Lower leg skin (tissue), 4 donors: ENCODE measurements at regions of chr19 and their contacts with region 1.

Region 1: DNA sequence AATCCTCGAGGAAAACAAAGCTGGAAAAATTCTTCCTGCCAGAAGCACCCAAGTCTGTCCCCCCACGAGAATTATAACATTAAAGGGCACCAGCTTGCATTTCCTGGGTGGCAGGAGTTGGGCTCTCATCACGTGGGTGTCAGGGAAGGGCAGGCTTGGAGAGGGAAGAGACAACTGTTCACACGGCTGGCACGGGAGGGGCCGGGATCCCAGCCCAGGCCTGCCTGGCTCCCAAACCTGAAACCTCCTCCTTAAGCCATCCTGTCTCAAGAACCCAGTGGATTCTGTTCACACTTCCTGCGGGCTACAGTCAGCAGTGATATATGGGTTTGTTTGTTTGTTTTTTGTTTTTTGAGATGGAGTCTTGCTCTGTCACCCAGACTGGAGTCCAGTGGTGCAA is 12.2 kb downstream of the GRIK5 start:
- DNase-seq: no peak
- H3K4me3 ChIP-seq: no peak overlapping the region
- CTCF ChIP-seq: no peak
- POLR2A ChIP-seq: no peak

Region 2: GRCh38 chr19:41969772-41970458 is 87.9 kb before region 1 on chr19:
- intact Hi-C with region 1: loop called (anchors 5 kb)
- DNase-seq: no peak
- H3K4me3 ChIP-seq: no peak overlapping the region
- CTCF ChIP-seq: no peak
- POLR2A ChIP-seq: no peak